CD14-positive monocyte (primary cell): ENCODE measurements at regions of chr14 and their contacts with region 1.

Region 1: GRCh38 chr14:105086833-105087307 is 21.6 kb upstream of the GPR132 start:
- DNase-seq: peak; percentile 78 to 83 (median 82)
- H3K4me3 ChIP-seq: peak overlapping the region; percentile 45 to 77 (median 57)
- H3K4me3 Mint-ChIP-seq: peak overlapping the region; percentile 78 to 85
- H3K27ac ChIP-seq: no peak overlapping the region
- H3K27ac Mint-ChIP-seq: peak overlapping the region in 3 of 7 donors; percentile 61 to 77 (median 68)
- H3K4me1 ChIP-seq: peaks cover 10 to 25% of the 10 kb centered on the region in 2 donors
- H3K4me1 Mint-ChIP-seq: peaks cover 15% of the 10 kb centered on the region
- H3K27me3 ChIP-seq: peaks cover 14 to 41% of the 10 kb centered on the region in 2 donors
- H3K27me3 Mint-ChIP-seq: peaks cover 25 to 69% (median 27%) of the 10 kb centered on the region in 3 donors
- CTCF ChIP-seq: peak; percentile 84

Region 2: DNA sequence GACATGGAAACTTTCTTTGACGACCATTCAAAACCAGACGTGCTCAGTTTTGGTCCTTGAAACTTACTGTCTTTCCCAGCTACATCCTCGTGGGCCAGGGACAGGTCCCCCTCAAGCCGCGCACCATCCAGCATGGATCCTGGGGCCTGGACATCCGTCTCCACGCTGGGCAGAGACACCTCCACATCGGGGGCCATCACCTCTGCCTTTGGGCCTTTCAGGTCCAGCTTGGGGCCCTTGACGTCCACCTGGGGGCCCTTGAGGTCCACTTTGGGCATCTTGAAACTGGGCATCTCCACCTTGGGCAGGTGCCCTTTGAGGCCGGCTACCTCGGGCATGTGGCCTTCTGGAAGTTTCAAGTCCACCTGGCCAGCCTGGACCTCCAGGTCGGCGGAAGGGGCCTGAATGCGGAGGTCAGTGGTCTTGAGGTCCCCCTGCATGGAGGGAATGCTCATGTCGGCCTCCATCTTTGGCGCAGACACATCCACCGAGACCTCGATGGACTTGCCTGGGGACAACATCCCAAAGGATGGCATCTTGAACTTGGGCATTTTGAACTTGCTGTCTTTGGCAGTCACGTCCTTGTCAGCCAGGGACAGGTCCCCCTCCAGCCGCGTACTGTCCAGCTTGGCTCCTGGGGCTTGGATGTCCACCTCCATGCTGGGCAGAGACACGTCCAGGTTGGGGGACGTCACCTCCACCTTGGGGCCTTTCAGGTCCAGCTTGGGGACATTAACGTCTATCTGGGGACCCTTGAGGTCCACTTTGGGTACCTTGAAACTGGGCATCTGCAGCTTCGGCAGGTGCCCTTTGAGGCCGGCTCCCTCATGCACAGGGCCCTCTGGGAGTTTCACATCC is 145.1 kb before region 1 on chr14:
- intact Hi-C with region 1: no loop called
- DNase-seq: peak in 1 of 3 donors; percentile 2
- H3K4me3 ChIP-seq: no peak overlapping the region
- H3K4me3 Mint-ChIP-seq: no peak overlapping the region
- H3K27ac ChIP-seq: no peak overlapping the region
- H3K27ac Mint-ChIP-seq: no peak overlapping the region
- H3K4me1 ChIP-seq: no peaks in the 10 kb centered on the region
- H3K4me1 Mint-ChIP-seq: no peaks in the 10 kb centered on the region
- H3K27me3 ChIP-seq: peaks cover 0 to 12% of the 10 kb centered on the region in 2 donors
- H3K27me3 Mint-ChIP-seq: peaks cover 14 to 25% (median 20%) of the 10 kb centered on the region in 3 donors
- CTCF ChIP-seq: no peak

Region 3: DNA sequence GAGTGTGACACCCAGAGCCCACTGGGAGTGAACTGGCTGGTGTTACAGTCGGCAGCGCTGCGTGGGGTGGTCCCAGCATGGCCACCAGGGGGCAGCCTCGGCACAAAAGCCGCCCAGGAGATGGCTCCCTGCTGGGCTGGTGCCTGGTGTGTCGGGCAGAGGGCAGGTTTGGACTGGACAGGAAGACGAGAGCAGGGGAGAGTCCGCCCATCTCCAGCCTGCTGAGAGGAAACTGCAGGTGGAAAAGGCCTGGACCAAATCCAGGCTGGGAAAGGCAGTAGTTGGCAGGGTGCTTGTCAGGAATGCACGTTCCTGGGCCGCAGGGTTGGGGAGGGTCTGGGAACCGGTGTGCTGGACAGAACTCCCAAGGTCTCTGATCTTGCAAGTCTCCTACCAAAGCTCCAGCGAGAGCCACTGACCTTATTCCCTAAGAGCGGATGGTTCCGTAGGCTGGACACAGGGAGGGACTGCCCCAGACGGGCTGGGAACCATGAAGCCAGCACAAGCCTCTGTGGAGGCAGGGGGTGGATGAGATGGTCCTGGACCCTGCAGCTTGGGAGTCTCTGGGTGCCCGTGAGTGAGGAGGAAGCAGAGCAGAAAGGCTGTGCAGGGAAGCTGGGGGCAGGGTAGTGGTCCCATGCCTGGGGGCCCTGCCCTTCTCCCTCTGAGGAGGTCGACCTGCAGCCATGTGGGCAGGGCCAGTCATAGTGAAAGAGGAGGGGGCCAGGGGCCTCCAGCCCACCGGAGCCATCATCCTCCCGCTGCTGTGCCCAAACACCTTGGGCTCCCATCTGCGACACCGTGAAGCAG is 110.5 kb before region 1 on chr14:
- intact Hi-C with region 1: loop called (anchors 2 to 5 kb)
- DNase-seq: peak; percentile 78 to 80 (median 80)
- H3K4me3 ChIP-seq: no peak overlapping the region
- H3K4me3 Mint-ChIP-seq: peak overlapping the region in 1 of 2 donors; percentile 79
- H3K27ac ChIP-seq: no peak overlapping the region
- H3K27ac Mint-ChIP-seq: peak overlapping the region in 2 of 7 donors; percentile 45 to 79
- H3K4me1 ChIP-seq: peaks cover 5 to 24% of the 10 kb centered on the region in 2 donors
- H3K4me1 Mint-ChIP-seq: peaks cover 17% of the 10 kb centered on the region
- H3K27me3 ChIP-seq: peaks cover 10 to 34% of the 10 kb centered on the region in 2 donors
- H3K27me3 Mint-ChIP-seq: peaks cover 38 to 43% (median 42%) of the 10 kb centered on the region in 3 donors
- CTCF ChIP-seq: peak; percentile 90

Region 4: DNA sequence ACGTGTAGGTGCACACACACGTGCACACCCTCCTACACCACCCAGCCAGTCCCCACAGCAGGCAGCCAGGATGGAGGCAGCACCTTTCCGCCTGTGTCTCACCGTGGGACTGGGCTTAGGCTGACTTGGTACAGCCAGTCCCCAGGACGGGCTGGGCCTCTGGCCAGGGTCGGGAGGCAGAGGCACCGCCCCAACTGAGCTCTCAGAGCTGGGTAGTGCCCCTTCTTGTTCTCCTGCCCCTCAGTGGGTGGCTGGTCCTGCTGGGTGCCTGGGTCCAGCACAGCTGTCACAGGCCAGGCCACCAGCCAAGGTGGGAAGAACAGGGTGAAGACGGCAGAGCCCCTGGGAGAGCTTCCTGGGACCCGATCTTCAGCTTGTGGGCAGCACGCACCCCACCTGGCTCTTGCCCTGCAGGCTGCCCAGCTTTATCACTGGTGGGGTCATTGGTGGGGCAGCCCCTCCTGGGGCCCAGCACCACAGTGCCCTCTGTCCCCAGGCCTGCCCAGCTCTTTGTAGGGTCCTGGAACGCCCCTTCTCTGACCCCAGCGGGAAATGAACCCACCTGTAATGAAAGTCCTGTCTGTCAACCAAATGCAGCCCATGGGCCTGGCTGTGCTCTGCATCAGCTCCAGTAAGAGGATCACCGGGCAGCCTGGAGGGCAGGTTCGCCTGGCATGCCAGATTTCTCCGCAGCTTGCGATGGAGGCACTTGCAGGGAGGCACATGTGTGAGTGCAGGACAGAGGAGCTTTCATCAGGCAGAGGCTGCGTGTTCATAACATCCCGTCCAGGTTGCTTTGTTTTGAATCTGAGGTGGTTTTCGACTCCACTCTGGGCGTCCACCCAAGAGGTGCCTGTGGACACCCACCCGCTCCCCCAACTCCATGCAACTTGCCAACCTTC is 80.7 kb before region 1 on chr14:
- intact Hi-C with region 1: no loop called
- DNase-seq: no peak
- H3K4me3 ChIP-seq: no peak overlapping the region
- H3K4me3 Mint-ChIP-seq: no peak overlapping the region
- H3K27ac ChIP-seq: no peak overlapping the region
- H3K27ac Mint-ChIP-seq: peak overlapping the region in 3 of 7 donors; percentile 44 to 60 (median 50)
- H3K4me1 ChIP-seq: no peaks in the 10 kb centered on the region
- H3K4me1 Mint-ChIP-seq: no peaks in the 10 kb centered on the region
- H3K27me3 ChIP-seq: no peaks in the 10 kb centered on the region
- H3K27me3 Mint-ChIP-seq: peaks cover 0 to 2% (median 0%) of the 10 kb centered on the region in 3 donors
- CTCF ChIP-seq: no peak

Region 5: DNA sequence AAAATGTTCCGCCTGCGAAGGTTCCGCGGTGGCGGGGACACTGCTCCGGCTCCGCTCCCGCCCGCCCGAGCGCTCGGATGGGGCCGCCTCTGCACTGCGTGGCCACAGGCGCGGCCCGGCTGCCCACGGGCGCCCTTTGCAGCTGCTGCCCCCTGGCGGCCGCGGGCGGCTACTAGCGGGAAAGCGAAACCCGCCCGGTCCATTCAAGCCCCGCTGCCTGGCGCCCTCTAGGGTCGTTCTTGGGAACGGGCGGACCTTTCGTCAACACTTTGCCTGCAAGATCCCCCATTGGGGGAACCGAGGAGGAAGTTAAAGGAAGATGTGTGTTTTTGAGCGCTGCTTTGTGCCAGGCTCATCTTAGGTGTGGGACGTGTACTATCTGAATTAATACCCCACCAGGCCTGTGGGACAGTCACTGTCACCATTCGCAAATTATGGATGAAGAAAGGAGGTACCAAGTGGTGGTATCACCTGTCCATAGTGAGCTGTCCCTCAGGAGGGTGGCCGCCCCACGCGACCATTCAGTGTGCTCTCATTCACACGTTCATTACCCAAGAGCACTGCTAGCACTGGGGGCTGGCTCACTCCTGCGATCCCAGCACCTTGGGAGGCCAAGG is 41.1 kb before region 1 on chr14:
- intact Hi-C with region 1: loop called in 1 of 2 experiments (anchors 5 kb)
- DNase-seq: peak; percentile 90 to 94 (median 91)
- H3K4me3 ChIP-seq: peak overlapping the region in 1 of 3 experiments; percentile 14
- H3K4me3 Mint-ChIP-seq: peak overlapping the region in 1 of 2 donors; percentile 51
- H3K27ac ChIP-seq: peak overlapping the region; percentile 21 to 38
- H3K27ac Mint-ChIP-seq: peak overlapping the region in 5 of 7 donors; percentile 19 to 77 (median 25)
- H3K4me1 ChIP-seq: peaks cover 32 to 38% of the 10 kb centered on the region in 2 donors
- H3K4me1 Mint-ChIP-seq: peaks cover 24% of the 10 kb centered on the region
- H3K27me3 ChIP-seq: no peaks in the 10 kb centered on the region
- H3K27me3 Mint-ChIP-seq: peaks cover 0 to 6% (median 2%) of the 10 kb centered on the region in 3 donors
- CTCF ChIP-seq: peak; percentile 100

Region 6: DNA sequence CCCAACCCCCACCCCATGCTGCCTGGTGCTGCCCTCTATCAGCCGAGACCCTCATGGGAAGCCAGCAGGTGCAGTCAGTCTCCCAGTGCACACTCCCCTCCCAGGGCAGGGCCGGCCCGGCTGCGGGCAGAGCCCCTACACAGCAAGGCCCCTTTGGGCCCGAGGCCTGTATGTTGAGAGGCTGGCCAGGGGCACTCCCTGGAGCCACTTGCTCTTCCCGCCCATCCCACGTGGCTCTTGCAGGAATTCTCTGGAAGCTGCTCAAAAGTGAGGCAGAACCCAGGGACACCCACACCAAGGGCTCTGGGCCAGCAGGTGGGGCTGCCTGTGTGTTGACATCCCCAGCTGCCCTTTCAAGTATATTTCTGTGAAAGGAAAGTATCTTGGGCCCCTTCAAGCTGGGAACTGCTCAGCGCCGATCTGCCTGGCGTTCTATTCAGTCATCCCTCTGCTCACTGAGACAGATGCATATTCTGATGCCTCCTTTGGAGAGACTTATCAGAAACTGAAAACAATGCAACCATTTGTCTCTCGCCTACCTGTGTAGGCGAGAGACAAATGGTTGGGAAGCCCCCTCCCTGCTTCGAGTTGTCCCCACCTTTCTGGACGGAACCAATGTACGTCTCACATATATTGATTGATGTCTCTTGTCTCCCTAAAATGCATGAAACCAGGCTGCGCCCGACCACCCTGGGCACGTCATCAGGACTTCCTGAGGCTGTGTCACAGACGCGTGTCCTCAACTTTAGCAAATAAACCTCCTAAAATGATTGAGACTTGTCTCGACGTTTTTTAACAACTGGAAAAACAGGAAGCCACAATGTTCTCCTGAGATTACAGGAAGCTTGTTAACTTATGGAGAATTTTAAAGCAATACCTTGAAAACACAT is 27.6 kb before region 1 on chr14:
- intact Hi-C with region 1: loop called (anchors 5 kb)
- DNase-seq: peak in 2 of 3 donors; percentile 44 to 52
- H3K4me3 ChIP-seq: peak overlapping the region in 1 of 3 experiments; percentile 87
- H3K4me3 Mint-ChIP-seq: peak overlapping the region; percentile 77 to 85
- H3K27ac ChIP-seq: peak overlapping the region; percentile 99 to 100
- H3K27ac Mint-ChIP-seq: peak overlapping the region; percentile 87 to 99 (median 89)
- H3K4me1 ChIP-seq: peaks cover 64 to 65% of the 10 kb centered on the region in 2 donors
- H3K4me1 Mint-ChIP-seq: peaks cover 63% of the 10 kb centered on the region
- H3K27me3 ChIP-seq: no peaks in the 10 kb centered on the region
- H3K27me3 Mint-ChIP-seq: peaks cover 0 to 3% (median 0%) of the 10 kb centered on the region in 3 donors
- CTCF ChIP-seq: peak; percentile 25

Region 7: DNA sequence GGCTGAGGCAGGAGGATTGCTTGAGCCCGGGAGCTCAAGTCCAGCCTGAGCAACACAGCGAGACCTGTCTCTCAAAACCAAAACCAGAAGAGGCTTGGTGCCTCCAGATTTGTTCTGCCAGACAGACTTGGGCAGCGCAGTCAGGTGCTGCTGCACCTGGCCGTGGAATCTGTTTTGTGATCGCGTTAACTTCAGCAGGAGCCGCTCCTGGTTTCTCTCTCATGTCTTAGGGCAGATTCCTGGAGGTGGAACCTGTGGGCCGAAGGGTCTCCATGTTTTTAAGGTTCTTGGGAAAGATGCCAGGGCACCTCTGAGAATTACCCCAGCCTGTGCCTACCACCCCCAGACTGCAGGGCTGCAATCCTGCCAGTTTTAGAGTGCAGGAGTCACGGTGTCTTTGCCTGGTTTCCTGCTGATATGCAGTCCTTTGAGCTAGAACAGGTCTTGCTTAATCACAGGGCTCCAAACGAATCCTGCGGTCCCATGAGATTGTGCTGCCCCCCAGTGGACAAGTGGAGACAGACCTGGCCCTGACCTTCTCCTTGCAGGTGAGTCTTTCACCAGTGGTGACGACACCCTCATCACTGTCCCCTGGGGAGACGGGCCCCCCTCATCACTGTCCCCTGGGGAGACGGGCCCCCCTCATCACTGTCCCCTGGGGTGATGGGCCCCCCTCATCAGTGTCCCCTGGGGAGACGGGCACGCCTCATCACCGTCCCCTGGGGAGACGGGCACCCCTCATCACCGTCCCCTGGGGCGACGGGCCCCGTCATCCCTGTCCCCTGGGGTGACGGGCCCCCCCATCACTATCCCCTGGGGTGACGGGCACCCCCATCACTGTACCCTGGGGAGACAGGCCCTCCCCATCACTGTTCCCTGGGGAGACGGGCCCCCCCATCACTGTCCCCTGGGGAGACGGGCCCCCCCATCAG is 265.3 kb after region 1 on chr14:
- intact Hi-C with region 1: loop called (anchors 1 to 2 kb)
- DNase-seq: peak; percentile 75 to 81 (median 81)
- H3K4me3 ChIP-seq: no peak overlapping the region
- H3K4me3 Mint-ChIP-seq: no peak overlapping the region
- H3K27ac ChIP-seq: no peak overlapping the region
- H3K27ac Mint-ChIP-seq: peak overlapping the region in 1 of 7 donors; percentile 18
- H3K4me1 ChIP-seq: peaks cover 3 to 4% of the 10 kb centered on the region in 2 donors
- H3K4me1 Mint-ChIP-seq: peaks cover 2% of the 10 kb centered on the region
- H3K27me3 ChIP-seq: no peaks in the 10 kb centered on the region
- H3K27me3 Mint-ChIP-seq: peaks cover 0 to 4% (median 0%) of the 10 kb centered on the region in 3 donors
- CTCF ChIP-seq: peak; percentile 88